ENCODE measurements at regions of chr6 and their contacts with region 1.

Region 1: GRCh38 chr6:52304983-52305390 is 20.4 kb upstream of the MCM3 start:
- DNase-seq: no peak
- H3K4me3 ChIP-seq: no peak overlapping the region
- H3K27ac ChIP-seq: peak overlapping the region in 1 of 2 donors; percentile 74
- H3K4me1 ChIP-seq: peaks cover 8% of the 10 kb centered on the region
- H3K27me3 ChIP-seq: no peaks in the 10 kb centered on the region
- CTCF ChIP-seq: no peak
- POLR2A ChIP-seq: no peak

Region 2: GRCh38 chr6:52371656-52372191 is 66.7 kb after region 1 on chr6:
- intact Hi-C with region 1: loop called (anchors 10 kb)
- DNase-seq: no peak
- H3K4me3 ChIP-seq: no peak overlapping the region
- H3K27ac ChIP-seq: no peak overlapping the region
- H3K4me1 ChIP-seq: peaks cover 14% of the 10 kb centered on the region
- H3K27me3 ChIP-seq: no peaks in the 10 kb centered on the region
- CTCF ChIP-seq: no peak
- POLR2A ChIP-seq: no peak

Measured in testis (tissue), 5 donors.